ENCODE measurements at regions of chr1 and their contacts with region 1.

Region 1: DNA sequence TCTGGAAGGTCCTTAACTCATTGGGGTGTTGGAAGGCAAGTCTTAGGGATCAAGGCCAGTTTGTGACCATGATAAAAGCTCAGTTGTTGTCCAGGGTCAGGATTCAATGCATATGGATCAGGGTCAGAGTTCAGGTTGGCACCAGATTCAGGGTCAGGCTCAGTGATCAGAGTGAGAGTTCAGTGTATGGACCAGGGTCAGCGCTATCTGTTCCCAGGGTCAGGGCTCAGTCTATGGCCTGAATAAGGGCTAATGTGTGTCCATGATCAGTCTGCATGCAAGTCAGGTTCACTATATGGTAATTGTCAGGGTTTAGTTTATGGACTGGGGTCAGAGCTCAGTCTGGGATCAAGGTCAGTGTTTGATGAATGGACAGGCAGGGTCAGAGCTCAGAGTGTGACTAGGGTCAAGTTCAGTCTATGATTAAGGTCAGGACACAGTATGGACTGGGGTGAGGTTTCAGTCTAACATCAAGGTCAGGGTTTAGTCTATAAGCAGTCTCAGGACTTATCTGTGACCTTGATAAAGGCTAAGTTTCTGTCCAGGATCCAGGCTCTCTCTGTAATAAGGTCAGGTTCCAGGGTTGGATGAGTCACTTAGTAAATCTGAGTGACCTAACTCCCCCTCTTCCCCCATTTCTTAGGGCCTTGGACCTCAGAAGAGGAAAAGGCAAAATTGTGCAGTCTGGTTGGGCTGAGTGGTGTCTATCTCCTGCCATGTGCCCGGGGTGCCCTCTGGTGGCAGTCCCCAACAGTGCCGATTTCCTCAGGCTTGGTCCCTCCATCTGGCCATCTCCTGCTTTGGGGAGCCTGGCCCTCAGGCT is 23.8 kb downstream of the KNCN start:
- DNase-seq: peak; percentile 78 to 79 (median 79)
- ATAC-seq: peak; percentile 88 to 91 (median 89)
- H3K4me3 ChIP-seq: no peak overlapping the region
- H3K27ac ChIP-seq: no peak overlapping the region
- H3K4me1 ChIP-seq: peaks cover 0 to 12% (median 0%) of the 10 kb centered on the region in 4 donors
- H3K27me3 ChIP-seq: no peaks in the 10 kb centered on the region
- CTCF ChIP-seq: peak; percentile 83 to 93 (median 90)
- POLR2A ChIP-seq: no peak

Region 2: GRCh38 chr1:46442317-46443161 is 85.1 kb before region 1 on chr1:
- intact Hi-C with region 1: loop called in 1 of 2 experiments (anchors 10 kb)
- DNase-seq: peak; percentile 68 to 73 (median 69)
- ATAC-seq: peak; percentile 77 to 90 (median 87)
- H3K4me3 ChIP-seq: peak overlapping the region in 1 of 3 donors; percentile 18
- H3K27ac ChIP-seq: no peak overlapping the region
- H3K4me1 ChIP-seq: peaks cover 0 to 4% (median 0%) of the 10 kb centered on the region in 4 donors
- H3K27me3 ChIP-seq: peaks cover 0 to 3% of the 10 kb centered on the region in 2 donors
- CTCF ChIP-seq: peak; percentile 66 to 90 (median 81)
- POLR2A ChIP-seq: no peak

Region 3: GRCh38 chr1:46477153-46477929 is 50.3 kb before region 1 on chr1:
- intact Hi-C with region 1: loop called (anchors 5 kb)
- DNase-seq: peak; percentile 71 to 76 (median 74)
- ATAC-seq: peak; percentile 88 to 96 (median 92)
- H3K4me3 ChIP-seq: no peak overlapping the region
- H3K27ac ChIP-seq: no peak overlapping the region
- H3K4me1 ChIP-seq: peaks cover 0 to 9% (median 0%) of the 10 kb centered on the region in 4 donors
- H3K27me3 ChIP-seq: no peaks in the 10 kb centered on the region
- CTCF ChIP-seq: peak; percentile 84 to 94 (median 94)
- POLR2A ChIP-seq: no peak

Region 4: DNA sequence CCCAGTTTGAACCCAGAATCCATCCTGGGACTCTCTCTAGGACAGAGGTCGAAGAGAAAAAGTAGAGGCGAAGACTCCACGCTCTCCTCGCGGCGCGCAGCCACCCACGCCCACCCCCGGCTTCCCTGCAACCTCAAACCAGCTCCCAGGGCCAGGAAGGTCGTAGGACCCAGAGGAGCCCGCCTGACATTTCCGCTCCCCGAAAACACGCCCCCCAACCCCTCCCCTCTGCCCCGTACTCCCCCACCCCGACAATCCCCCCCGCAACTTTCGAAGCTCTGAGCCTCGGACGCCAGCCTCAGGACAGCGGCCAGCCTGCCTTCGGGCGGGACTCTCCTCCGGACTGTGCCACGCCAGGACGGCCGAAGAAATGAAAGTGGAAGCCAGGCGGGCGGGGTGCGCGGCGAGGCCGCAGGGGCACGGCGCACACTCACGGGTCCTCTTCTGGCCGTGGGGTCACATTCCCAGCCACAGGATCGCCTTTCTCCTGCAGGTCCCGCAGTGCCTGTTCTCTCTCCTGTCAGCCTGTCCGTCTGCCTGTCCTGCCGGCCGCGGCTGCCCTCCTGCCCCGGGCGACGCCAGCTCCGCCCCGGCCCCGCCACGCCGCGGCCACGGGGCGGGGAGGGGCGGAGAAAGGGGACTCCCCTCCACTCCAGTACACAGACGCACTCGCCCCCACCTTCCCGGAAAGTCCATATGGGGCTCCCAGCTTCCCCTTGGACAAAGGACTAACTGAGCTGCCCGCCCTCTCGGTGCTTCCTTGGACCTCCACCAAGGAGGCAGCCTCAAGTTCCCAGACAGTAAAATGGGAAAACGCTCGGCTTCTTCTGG is 88.8 kb after region 1 on chr1 and contains the start of gene MOB3C:
- intact Hi-C with region 1: no loop called
- DNase-seq: peak; percentile 86 to 89 (median 86)
- ATAC-seq: peak; percentile 88 to 95 (median 94)
- H3K4me3 ChIP-seq: peak within 1 kb of the TSS; percentile 49 to 90 (median 71)
- H3K27ac ChIP-seq: peak within 1 kb of the TSS; percentile 66 to 82 (median 78)
- H3K4me1 ChIP-seq: peaks cover 0 to 22% (median 4%) of the 10 kb centered on the region in 4 donors
- H3K27me3 ChIP-seq: no peaks in the 10 kb centered on the region
- CTCF ChIP-seq: no peak
- POLR2A ChIP-seq: peak; percentile 88
- total RNA-seq, gene MOB3C: 2.6 to 6.3 (median 5.7) TPM

Measured in right lobe of liver (tissue), 6 donors.